Caco-2 (cell line): ENCODE measurements at regions of chr5 and their contacts with region 1.

Region 1: DNA sequence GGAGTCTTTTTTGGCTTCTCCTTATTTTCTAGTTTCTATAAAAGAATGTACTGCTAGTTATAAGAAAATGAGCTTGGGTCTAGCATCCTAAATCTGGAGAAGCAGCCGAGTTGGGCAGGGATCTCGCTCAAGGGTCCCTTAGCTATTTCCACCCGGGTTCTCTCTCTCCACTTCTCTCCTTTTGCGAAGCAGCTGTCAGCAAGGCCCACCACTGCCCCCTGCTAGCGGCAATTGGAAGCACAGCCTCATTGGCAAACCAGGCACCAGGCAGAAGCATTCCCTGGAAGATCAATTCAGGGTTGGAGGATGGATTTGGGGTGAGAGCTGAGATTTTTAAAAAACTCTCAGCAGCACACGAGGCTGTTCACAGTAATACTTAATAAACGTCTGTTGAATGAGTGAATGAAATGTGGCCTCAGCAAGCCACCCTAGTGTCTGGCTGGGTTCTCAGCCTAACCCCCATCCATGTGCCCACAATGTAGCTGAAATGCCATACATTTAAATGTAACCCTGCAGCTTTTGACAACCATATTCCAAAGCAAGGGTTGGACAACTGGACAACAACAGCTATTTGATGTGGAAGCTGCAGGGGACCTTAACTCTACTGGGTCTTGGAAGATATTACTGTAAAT is 34.6 kb upstream of the TNIP1 start:
- DNase-seq: peak; percentile 74 to 83
- H3K4me3 ChIP-seq: no peak overlapping the region
- H3K4me3 Mint-ChIP-seq: no peak overlapping the region
- H3K27ac Mint-ChIP-seq: no peak overlapping the region
- H3K4me1 ChIP-seq: no peaks in the 10 kb centered on the region
- H3K4me1 Mint-ChIP-seq: peaks cover 7% of the 10 kb centered on the region
- H3K27me3 ChIP-seq: no peaks in the 10 kb centered on the region
- H3K27me3 Mint-ChIP-seq: no peaks in the 10 kb centered on the region
- CTCF ChIP-seq: peak; percentile 93 to 94

Region 2: GRCh38 chr5:150582241-150583109 is 532.9 kb before region 1 on chr5:
- CTCF ChIA-PET with region 1: no interaction called
- POLR2A ChIA-PET with region 1: no interaction called
- intact Hi-C with region 1: no loop called
- DNase-seq: peak; percentile 88 to 94
- H3K4me3 ChIP-seq: peak overlapping the region; percentile 32
- H3K4me3 Mint-ChIP-seq: peak overlapping the region; percentile 75
- H3K27ac Mint-ChIP-seq: peak overlapping the region; percentile 91
- H3K4me1 ChIP-seq: peaks cover 57% of the 10 kb centered on the region
- H3K4me1 Mint-ChIP-seq: peaks cover 17% of the 10 kb centered on the region
- H3K27me3 ChIP-seq: no peaks in the 10 kb centered on the region
- H3K27me3 Mint-ChIP-seq: no peaks in the 10 kb centered on the region
- CTCF ChIP-seq: no peak

Region 3: GRCh38 chr5:151051066-151051930 is 64.1 kb before region 1 on chr5:
- CTCF ChIA-PET with region 1: interaction called, 51 read pairs
- POLR2A ChIA-PET with region 1: no interaction called
- intact Hi-C with region 1: loop called (anchors 1 kb)
- DNase-seq: peak; percentile 72 to 78
- H3K4me3 ChIP-seq: no peak overlapping the region
- H3K4me3 Mint-ChIP-seq: no peak overlapping the region
- H3K27ac Mint-ChIP-seq: peak overlapping the region; percentile 53
- H3K4me1 ChIP-seq: peaks cover 6% of the 10 kb centered on the region; the same call in 1 of the 2 replicates
- H3K4me1 Mint-ChIP-seq: peaks cover 10% of the 10 kb centered on the region
- H3K27me3 ChIP-seq: no peaks in the 10 kb centered on the region
- H3K27me3 Mint-ChIP-seq: no peaks in the 10 kb centered on the region
- CTCF ChIP-seq: peak; percentile 81 to 89

Region 4: DNA sequence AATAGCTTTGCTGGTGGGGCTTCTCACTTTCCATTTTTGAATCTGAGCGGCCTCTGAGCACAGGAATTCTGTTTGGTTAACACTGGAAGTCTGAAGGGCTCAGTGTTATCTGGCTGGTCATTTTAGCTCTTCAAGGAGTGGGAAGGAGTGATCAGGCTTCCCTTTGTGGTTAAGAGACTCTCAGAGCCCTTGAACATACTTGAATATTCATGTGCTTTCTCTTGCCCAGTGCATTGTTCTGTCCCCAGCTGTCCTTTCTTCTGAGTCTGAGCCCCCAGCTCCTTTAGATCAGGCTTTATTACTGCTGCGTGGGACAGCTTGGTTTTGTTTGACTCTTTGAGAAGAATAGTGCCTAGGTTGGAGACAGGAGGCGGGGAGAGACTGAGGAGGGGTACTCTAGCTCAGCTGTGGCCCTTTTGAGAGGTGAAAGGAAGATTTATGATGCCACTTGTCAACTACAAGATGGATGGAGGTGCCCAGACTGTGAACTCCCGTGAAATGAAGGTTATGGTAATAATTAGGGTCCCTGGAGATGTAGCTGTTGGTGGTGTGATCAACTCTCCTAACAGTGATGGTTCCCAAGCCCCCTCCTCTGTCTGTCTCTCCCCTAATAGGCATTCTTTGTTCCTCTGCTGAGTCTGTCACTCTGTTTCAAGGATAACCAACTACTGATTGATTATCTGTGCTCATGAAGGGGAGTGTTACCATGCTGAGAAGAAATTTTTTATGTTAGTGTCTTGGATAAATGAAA is 892.4 kb after region 1 on chr5:
- CTCF ChIA-PET with region 1: no interaction called
- POLR2A ChIA-PET with region 1: no interaction called
- intact Hi-C with region 1: no loop called
- DNase-seq: no peak
- H3K4me3 ChIP-seq: no peak overlapping the region
- H3K4me3 Mint-ChIP-seq: no peak overlapping the region
- H3K27ac Mint-ChIP-seq: no peak overlapping the region
- H3K4me1 ChIP-seq: no peaks in the 10 kb centered on the region
- H3K4me1 Mint-ChIP-seq: no peaks in the 10 kb centered on the region
- H3K27me3 ChIP-seq: no peaks in the 10 kb centered on the region
- H3K27me3 Mint-ChIP-seq: peaks cover 8% of the 10 kb centered on the region
- CTCF ChIP-seq: no peak